Tibial artery (tissue), 4 donors: ENCODE measurements at regions of chr22 and their contacts with region 1.

Region 1: GRCh38 chr22:33920927-33921524 is 750 bp upstream of the LARGE1 start:
- DNase-seq: peak; percentile 98 to 99
- H3K4me3 ChIP-seq: peak overlapping the region; percentile 88 to 96
- H3K27ac ChIP-seq: peak overlapping the region; percentile 82 to 86
- H3K4me1 ChIP-seq: peaks cover 0 to 22% (median 18%) of the 10 kb centered on the region in 4 donors
- H3K27me3 ChIP-seq: no peaks in the 10 kb centered on the region
- CTCF ChIP-seq: no peak

Region 2: GRCh38 chr22:33853200-33854097 is 67.6 kb before region 1 on chr22:
- intact Hi-C with region 1: loop called (anchors 5 kb)
- DNase-seq: peak; percentile 53 to 81
- H3K4me3 ChIP-seq: peak overlapping the region; percentile 54
- H3K27ac ChIP-seq: peak overlapping the region; percentile 60 to 67
- H3K4me1 ChIP-seq: peaks cover 0 to 27% (median 12%) of the 10 kb centered on the region in 4 donors
- H3K27me3 ChIP-seq: no peaks in the 10 kb centered on the region
- CTCF ChIP-seq: no peak

Region 3: GRCh38 chr22:33873186-33873585 is 47.8 kb before region 1 on chr22:
- intact Hi-C with region 1: loop called (anchors 2 kb)
- DNase-seq: peak in 1 of 2 donors; percentile 72
- H3K4me3 ChIP-seq: no peak overlapping the region
- H3K27ac ChIP-seq: peak overlapping the region; percentile 68 to 74
- H3K4me1 ChIP-seq: peaks cover 0 to 64% (median 42%) of the 10 kb centered on the region in 4 donors
- H3K27me3 ChIP-seq: no peaks in the 10 kb centered on the region
- CTCF ChIP-seq: no peak

Region 4: DNA sequence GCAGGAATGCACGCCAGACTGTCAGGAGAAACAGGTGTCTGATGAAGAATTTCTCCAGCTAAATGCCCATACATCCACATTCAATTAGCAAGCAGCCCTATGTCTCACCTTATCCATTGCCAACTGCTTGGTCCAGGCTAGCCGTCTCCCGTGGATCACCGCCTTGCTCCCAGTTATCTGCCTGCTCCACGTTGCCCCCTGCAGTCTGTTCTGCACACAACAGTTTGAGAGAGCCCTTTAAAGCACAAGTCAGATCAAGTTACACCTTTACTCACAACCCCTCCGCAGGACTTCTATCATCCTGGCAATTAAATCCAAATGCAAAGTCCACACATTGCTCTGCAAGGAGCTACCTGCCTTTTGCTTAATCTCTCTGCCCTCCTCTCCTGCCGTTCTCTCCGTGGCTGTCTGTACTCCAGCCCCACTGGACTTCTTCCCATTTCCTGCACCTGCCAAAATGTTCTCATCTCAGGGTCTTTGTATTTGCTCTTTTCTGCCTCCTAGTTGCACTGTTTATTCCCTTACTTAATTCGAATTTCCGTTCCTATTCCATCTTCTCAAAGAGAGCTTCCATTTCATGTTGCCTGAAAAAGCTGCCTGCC is 184.5 kb after region 1 on chr22:
- intact Hi-C with region 1: loop called (anchors 5 kb)
- DNase-seq: peak; percentile 51 to 67
- H3K4me3 ChIP-seq: no peak overlapping the region
- H3K27ac ChIP-seq: no peak overlapping the region
- H3K4me1 ChIP-seq: no peaks in the 10 kb centered on the region
- H3K27me3 ChIP-seq: peaks cover 0 to 6% of the 10 kb centered on the region in 2 donors
- CTCF ChIP-seq: peak; percentile 46 to 55

Region 5: GRCh38 chr22:34135751-34136150 is 214.7 kb after region 1 on chr22:
- intact Hi-C with region 1: no loop called
- DNase-seq: no peak
- H3K4me3 ChIP-seq: no peak overlapping the region
- H3K27ac ChIP-seq: no peak overlapping the region
- H3K4me1 ChIP-seq: no peaks in the 10 kb centered on the region
- H3K27me3 ChIP-seq: no peaks in the 10 kb centered on the region
- CTCF ChIP-seq: no peak

Region 6: DNA sequence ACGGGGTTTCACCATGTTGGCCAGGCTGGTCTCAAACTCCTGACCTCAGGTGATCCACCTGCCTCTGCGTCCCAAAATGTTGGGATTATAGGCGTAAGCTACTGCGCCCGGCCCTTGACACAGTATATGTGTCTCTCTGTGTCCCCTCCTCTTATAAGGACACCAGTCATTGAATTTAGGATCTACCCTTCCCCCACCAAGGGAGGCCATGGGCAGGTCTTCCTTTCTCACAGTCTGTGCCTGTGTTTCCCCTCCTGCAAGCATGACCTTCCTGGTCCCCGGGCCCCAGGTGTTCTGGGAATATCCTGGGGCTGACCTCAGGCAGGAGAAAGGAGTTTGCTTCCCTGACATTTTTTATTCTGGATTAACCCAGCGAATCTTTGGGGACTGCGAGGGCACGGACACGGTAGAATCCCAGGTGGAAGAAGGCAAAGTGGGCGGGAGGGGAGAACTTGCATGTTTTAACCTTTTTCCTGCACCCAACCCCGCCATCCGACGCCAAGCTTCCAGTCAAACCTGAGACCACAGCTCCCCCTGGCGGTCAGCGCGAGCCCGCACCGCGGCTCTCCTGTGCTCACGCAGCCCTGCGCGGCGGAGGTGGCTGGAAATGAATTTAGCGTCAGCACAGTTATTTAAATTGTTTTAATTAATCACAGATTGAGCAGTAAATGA is 1102.8 kb after region 1 on chr22:
- intact Hi-C with region 1: loop called (anchors 10 kb)
- DNase-seq: peak; percentile 45 to 64
- H3K4me3 ChIP-seq: no peak overlapping the region
- H3K27ac ChIP-seq: no peak overlapping the region
- H3K4me1 ChIP-seq: no peaks in the 10 kb centered on the region
- H3K27me3 ChIP-seq: peaks cover 0 to 10% of the 10 kb centered on the region in 2 donors
- CTCF ChIP-seq: peak; percentile 62 to 79